HepG2 (cell line): ENCODE measurements at regions of chr19 and their contacts with region 1.

Region 1: GRCh38 chr19:58519355-58520256 is at the start of gene ZBTB45:
- DNase-seq: peak; percentile 90
- ATAC-seq: peak; percentile 84
- H3K4me3 ChIP-seq: peak within 1 kb of the TSS; percentile 78 to 94 (median 90)
- H3K27ac ChIP-seq: peak within 1 kb of the TSS; percentile 88
- H3K4me1 ChIP-seq: peaks cover 28% of the 10 kb centered on the region
- H3K27me3 ChIP-seq: no peaks in the 10 kb centered on the region; a peak in 1 of 5 replicates
- CTCF ChIP-seq: peak; percentile 96
- EP300 ChIP-seq: peak in 1 of 2 experiments; percentile 62; a peak in 2 of 4 replicates
- POLR2A ChIP-seq: peak; percentile 64 to 80; a peak in 3 of 4 replicates
- RAD21 ChIP-seq: peak; percentile 86
- total RNA-seq, gene ZBTB45: 2.0 and 3.7 TPM in 2 replicates

Region 2: GRCh38 chr19:58338825-58339558 is 180.6 kb before region 1 on chr19:
- CTCF ChIA-PET with region 1: no interaction called
- POLR2A ChIA-PET with region 1: no interaction called
- in situ Hi-C with region 1: no loop called
- intact Hi-C with region 1: no loop called
- DNase-seq: no peak
- ATAC-seq: peak; percentile 61
- H3K4me3 ChIP-seq: no peak overlapping the region
- H3K27ac ChIP-seq: no peak overlapping the region
- H3K4me1 ChIP-seq: no peaks in the 10 kb centered on the region
- H3K27me3 ChIP-seq: no peaks in the 10 kb centered on the region
- CTCF ChIP-seq: no peak
- EP300 ChIP-seq: no peak
- POLR2A ChIP-seq: no peak
- RAD21 ChIP-seq: no peak

Region 3: GRCh38 chr19:58466760-58467589 is 52.6 kb before region 1 on chr19 and contains the start of gene ZNF324:
- CTCF ChIA-PET with region 1: no interaction called
- POLR2A ChIA-PET with region 1: no interaction called
- in situ Hi-C with region 1: no loop called
- intact Hi-C with region 1: loop called (anchors 2 kb)
- DNase-seq: peak; percentile 94
- ATAC-seq: peak; percentile 89
- H3K4me3 ChIP-seq: peak within 1 kb of the TSS; percentile 71 to 93 (median 86)
- H3K27ac ChIP-seq: peak within 1 kb of the TSS; percentile 51
- H3K4me1 ChIP-seq: peaks cover 24% of the 10 kb centered on the region
- H3K27me3 ChIP-seq: no peaks in the 10 kb centered on the region
- CTCF ChIP-seq: peak; percentile 62
- EP300 ChIP-seq: no peak
- POLR2A ChIP-seq: peak; percentile 64 to 74
- RAD21 ChIP-seq: no peak
- total RNA-seq, gene ZNF324: 4.0 and 4.7 TPM in 2 replicates

Region 4: GRCh38 chr19:58538257-58539168 is 18.9 kb after region 1 on chr19:
- CTCF ChIA-PET with region 1: no interaction called
- POLR2A ChIA-PET with region 1: interaction called, 59 read pairs
- in situ Hi-C with region 1: no loop called
- intact Hi-C with region 1: no loop called
- DNase-seq: no peak
- ATAC-seq: peak; percentile 72
- H3K4me3 ChIP-seq: peak overlapping the region; percentile 23 to 57 (median 55); a peak in 5 of 6 replicates
- H3K27ac ChIP-seq: no peak overlapping the region
- H3K4me1 ChIP-seq: peaks cover 28% of the 10 kb centered on the region
- H3K27me3 ChIP-seq: no peaks in the 10 kb centered on the region; a peak in 1 of 5 replicates
- CTCF ChIP-seq: no peak
- EP300 ChIP-seq: no peak
- POLR2A ChIP-seq: peak in 1 of 2 experiments; percentile 24; a peak in 1 of 4 replicates
- RAD21 ChIP-seq: no peak

Region 5: GRCh38 chr19:58558623-58559274 is 39.1 kb after region 1 on chr19:
- CTCF ChIA-PET with region 1: no interaction called
- POLR2A ChIA-PET with region 1: interaction called, 31 read pairs
- in situ Hi-C with region 1: no loop called
- intact Hi-C with region 1: no loop called
- DNase-seq: peak; percentile 95
- ATAC-seq: peak; percentile 66
- H3K4me3 ChIP-seq: peak overlapping the region; percentile 71 to 84 (median 84)
- H3K27ac ChIP-seq: peak overlapping the region; percentile 96
- H3K4me1 ChIP-seq: peaks cover 34% of the 10 kb centered on the region
- H3K27me3 ChIP-seq: no peaks in the 10 kb centered on the region
- CTCF ChIP-seq: 0 out of 2 replicates have a peak, but pooled peaks have one; percentile 9
- EP300 ChIP-seq: no peak
- POLR2A ChIP-seq: peak in 1 of 2 experiments; percentile 75; a peak in 1 of 4 replicates
- RAD21 ChIP-seq: peak; percentile 52